Common myeloid progenitor, CD34-positive (primary cell): ENCODE measurements at regions of chr9 and their contacts with region 1.

Region 1: DNA sequence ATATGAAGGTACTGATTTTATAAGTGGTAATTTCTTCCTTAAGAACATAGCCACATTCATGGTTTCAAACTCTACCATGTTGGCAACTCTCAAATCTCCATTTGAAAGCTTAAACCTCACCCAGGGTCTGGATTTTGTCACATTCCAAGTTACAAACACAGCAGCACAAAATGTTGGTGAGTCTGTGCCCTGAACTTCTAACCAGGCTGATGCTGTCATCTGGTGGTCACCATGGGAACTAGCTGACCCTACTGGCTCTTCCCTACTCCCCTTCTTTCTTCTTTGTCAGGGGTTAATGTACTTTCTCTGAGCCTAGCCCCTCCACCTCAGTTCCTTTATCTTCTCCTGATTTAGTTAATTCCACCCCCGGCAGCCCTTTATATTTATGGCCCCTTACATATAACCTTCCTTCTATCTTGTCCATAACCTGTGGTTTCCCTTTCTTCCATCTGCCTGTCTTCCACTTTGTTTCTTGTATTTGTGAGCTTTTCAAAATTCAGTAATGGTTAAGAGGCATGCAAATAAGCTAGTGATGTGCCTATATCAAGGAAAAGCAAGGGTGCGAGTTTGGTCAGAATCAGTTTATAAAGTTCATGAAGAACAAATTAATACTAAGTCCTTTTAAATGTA is 35.9 kb downstream of the TGFBR1 start:
- DNase-seq: peak; percentile 68 to 85 (median 79)
- H3K4me3 ChIP-seq: no peak overlapping the region
- H3K27ac ChIP-seq: no peak overlapping the region
- H3K4me1 ChIP-seq: peaks cover 16 to 37% (median 27%) of the 10 kb centered on the region in 4 experiments
- H3K27me3 ChIP-seq: no peaks in the 10 kb centered on the region

Region 2: DNA sequence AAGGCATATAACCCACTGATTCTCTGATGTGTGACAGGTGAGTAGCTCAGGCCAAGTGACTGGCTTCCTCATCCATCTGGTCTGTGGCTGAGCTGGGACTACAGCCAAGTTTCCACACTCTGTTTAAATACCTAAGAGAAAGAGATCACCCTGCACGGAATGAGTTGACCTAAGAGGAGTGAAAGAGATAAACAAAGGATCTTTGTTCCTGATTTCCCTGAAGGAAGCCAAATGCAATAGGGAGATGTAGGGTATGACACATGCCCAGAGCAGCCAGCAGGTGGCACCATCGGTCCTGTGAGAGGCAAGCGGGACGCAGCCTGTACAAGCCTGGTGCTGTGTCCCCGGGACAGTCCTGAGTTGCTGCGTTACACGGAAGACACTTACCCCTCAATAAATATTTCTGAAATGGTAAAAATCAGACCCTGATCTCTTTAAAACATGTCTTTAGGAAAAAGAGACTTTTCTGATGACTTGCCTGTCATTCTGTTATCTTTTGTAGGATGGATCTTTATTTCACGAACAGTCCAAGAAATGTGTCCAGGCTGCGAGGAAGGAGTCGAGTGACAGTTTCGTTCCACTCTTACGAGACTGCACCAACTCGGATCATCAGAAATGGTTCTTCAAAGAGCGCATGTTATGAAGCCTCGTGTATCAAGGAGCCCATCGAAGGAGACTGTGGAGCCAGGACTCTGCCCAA is 292.2 kb before region 1 on chr9:
- CTCF ChIA-PET with region 1: interaction called, 79 read pairs
- POLR2A ChIA-PET with region 1: no interaction called
- DNase-seq: peak; percentile 80 to 86 (median 81)
- H3K4me3 ChIP-seq: no peak overlapping the region
- H3K27ac ChIP-seq: no peak overlapping the region
- H3K4me1 ChIP-seq: peaks cover 0 to 6% (median 0%) of the 10 kb centered on the region in 4 experiments
- H3K27me3 ChIP-seq: no peaks in the 10 kb centered on the region

Region 3: DNA sequence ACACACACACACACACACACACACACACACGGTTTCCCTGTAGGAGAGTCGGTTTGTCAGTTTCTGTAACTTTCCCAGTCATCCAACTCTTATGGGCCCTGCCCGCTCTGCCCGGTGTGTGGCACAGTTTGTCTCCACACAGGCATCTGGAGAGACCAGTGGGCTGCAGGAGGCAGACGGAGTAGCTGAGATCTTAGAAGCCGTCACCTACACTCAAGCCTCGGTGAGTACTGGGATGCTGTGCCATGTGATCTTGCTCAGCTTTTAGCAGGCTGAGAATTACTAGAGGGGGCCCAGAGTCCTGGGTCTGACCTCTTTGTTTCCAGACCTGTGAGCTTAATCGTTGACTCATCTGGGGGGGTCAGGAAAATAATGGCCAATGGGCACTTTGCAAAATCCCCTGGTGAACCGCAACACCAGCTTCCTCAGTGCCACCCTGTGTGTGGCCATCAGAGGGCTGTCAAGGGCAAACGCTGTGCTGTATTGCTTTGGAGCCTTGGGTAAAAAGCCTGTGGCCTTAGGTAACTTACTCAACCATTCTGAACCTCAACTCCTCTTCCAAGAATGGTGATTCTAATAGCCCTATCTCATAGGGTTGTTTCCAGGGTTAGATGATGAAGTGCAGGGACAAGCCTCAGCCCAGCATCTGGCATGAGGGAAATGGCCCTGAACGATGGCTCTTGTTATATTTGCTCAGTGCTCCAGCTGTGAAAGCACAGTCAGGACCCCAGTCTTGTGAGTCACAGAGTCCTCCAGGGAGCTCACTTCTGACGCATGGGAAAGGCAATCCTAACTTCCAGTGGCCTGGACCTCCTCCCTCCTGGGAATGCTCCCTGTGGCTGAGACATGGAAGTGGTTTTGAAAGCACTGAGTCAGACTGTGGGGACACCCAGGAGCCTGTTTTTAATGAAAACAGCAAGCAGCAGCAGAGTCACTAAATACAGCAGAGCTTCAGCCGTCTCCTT is 151.5 kb before region 1 on chr9:
- CTCF ChIA-PET with region 1: interaction called, 313 read pairs
- POLR2A ChIA-PET with region 1: no interaction called
- DNase-seq: no peak
- H3K4me3 ChIP-seq: no peak overlapping the region
- H3K27ac ChIP-seq: no peak overlapping the region
- H3K4me1 ChIP-seq: peaks cover 0 to 8% (median 0%) of the 10 kb centered on the region in 4 experiments
- H3K27me3 ChIP-seq: no peaks in the 10 kb centered on the region

Region 4: GRCh38 chr9:99057665-99058625 is 82.9 kb before region 1 on chr9:
- CTCF ChIA-PET with region 1: interaction called, 48 read pairs
- POLR2A ChIA-PET with region 1: no interaction called
- DNase-seq: peak; percentile 83 to 95 (median 92)
- H3K4me3 ChIP-seq: peak overlapping the region in 5 of 7 experiments; percentile 6 to 54 (median 40)
- H3K27ac ChIP-seq: no peak overlapping the region
- H3K4me1 ChIP-seq: peaks cover 41 to 78% (median 50%) of the 10 kb centered on the region in 4 experiments
- H3K27me3 ChIP-seq: no peaks in the 10 kb centered on the region

Region 5: GRCh38 chr9:99169982-99170761 is 29.4 kb after region 1 on chr9:
- CTCF ChIA-PET with region 1: no interaction called
- POLR2A ChIA-PET with region 1: no interaction called
- DNase-seq: no peak
- H3K4me3 ChIP-seq: no peak overlapping the region
- H3K27ac ChIP-seq: no peak overlapping the region
- H3K4me1 ChIP-seq: peaks cover 7 to 15% (median 13%) of the 10 kb centered on the region in 4 experiments
- H3K27me3 ChIP-seq: no peaks in the 10 kb centered on the region